Common myeloid progenitor, CD34-positive (primary cell): ENCODE measurements at regions of chr21 and their contacts with region 1.

Region 1: DNA sequence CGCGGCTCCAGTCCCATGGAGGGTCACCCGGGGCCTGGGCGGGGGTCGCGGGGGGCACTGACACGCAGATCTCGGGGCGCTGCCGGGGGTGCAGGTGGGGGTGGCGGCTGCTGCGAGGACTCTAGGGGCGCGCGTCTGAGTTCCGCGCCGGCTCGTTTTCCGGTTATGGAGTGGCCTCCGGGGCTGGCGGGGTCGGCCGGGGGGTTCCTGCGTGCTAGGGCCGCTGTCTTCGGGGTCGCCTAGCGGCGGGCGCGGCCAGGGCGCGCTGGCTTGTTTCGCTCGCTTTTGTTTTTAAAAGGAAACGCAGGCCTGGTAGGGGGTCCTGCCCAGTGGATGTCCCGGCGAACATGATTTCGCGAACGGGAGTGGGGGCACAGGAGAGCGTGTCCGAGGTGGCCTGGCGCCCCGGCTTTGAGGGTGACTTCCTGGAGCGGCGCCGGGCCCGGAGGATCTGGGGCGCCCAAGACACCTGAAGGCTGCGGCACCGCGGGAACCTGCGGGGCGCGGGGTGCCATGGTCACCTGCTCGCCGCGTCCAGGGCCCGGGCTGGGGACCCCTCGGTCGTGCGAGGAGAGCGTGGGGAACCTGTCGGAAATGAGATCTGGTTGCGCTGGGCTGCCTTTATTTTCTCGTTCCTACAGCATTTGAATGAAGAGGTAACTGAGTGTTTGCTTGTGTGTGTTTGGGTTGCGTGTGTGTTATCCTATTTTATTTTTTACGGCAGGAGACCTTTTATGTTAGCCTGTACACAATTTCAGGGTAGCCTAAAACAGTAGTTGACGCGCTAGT is 618 bp downstream of the ETS2 start:
- DNase-seq: peak in 2 of 3 donors; percentile 62 to 79
- H3K4me3 ChIP-seq: peak overlapping the region; percentile 87 to 99 (median 95)
- H3K27ac ChIP-seq: peak overlapping the region; percentile 91 to 93
- H3K4me1 ChIP-seq: peaks cover 20 to 67% (median 58%) of the 10 kb centered on the region in 4 experiments
- H3K27me3 ChIP-seq: no peaks in the 10 kb centered on the region

Region 2: DNA sequence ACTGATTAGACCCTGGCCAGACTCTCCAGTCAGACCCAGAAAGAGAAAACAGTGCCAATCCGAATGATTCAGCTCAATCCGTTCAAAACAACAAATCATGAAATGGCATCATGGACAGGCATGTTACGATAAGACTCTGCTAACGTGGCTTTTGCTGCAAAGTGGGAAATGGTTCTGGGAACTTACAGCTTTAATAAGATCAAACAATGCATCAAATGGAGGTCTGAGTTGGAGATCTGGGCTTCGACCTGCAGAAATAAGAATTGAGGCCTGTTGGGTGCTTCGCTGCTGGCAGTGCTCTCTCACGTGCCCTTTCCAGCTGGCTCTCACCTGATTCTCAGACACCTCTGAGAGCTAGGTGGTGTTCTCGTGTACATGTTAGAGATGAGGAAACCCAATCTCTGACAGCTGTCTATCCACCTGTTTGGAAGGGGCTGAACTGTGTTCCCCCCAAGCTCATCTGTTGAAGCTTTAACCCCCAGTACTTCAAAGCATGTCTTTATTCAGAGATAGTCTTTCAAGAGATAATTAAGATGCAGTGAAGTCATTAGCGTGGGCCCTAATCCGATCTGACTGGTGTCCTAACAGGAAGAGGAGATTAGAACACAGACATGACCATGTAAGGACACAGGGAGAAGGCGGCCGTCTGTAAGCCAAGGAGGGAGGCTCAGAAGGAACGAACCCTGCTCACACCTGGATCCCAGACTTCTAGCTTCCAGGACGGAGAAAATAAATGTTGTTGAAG is 46.2 kb before region 1 on chr21:
- CTCF ChIA-PET with region 1: interaction called, 15 read pairs
- POLR2A ChIA-PET with region 1: interaction called, 4 read pairs
- DNase-seq: peak; percentile 74 to 88 (median 85)
- H3K4me3 ChIP-seq: no peak overlapping the region
- H3K27ac ChIP-seq: peak overlapping the region in 1 of 2 experiments; percentile 30
- H3K4me1 ChIP-seq: peaks cover 9 to 62% (median 35%) of the 10 kb centered on the region in 4 experiments
- H3K27me3 ChIP-seq: no peaks in the 10 kb centered on the region

Region 3: GRCh38 chr21:38824124-38824822 is 17.9 kb after region 1 on chr21:
- CTCF ChIA-PET with region 1: interaction called, 20 read pairs
- POLR2A ChIA-PET with region 1: no interaction called
- DNase-seq: no peak
- H3K4me3 ChIP-seq: no peak overlapping the region
- H3K27ac ChIP-seq: peak overlapping the region in 1 of 2 experiments; percentile 55
- H3K4me1 ChIP-seq: peaks cover 0 to 31% (median 12%) of the 10 kb centered on the region in 4 experiments
- H3K27me3 ChIP-seq: no peaks in the 10 kb centered on the region